Activated naive CD4-positive, alpha-beta T cell treated with anti-CD3 and anti-CD28 coated beads for 36 hours (primary cell): ENCODE measurements at regions of chr17 and their contacts with region 1.

Region 1: GRCh38 chr17:77186141-77186604 is 45.4 kb downstream of the SEC14L1 start:
- DNase-seq: peak; percentile 46
- H3K4me3 Mint-ChIP-seq: no peak overlapping the region
- H3K27ac Mint-ChIP-seq: no peak overlapping the region
- H3K4me1 Mint-ChIP-seq: peaks cover 44% of the 10 kb centered on the region
- H3K27me3 Mint-ChIP-seq: no peaks in the 10 kb centered on the region

Region 2: DNA sequence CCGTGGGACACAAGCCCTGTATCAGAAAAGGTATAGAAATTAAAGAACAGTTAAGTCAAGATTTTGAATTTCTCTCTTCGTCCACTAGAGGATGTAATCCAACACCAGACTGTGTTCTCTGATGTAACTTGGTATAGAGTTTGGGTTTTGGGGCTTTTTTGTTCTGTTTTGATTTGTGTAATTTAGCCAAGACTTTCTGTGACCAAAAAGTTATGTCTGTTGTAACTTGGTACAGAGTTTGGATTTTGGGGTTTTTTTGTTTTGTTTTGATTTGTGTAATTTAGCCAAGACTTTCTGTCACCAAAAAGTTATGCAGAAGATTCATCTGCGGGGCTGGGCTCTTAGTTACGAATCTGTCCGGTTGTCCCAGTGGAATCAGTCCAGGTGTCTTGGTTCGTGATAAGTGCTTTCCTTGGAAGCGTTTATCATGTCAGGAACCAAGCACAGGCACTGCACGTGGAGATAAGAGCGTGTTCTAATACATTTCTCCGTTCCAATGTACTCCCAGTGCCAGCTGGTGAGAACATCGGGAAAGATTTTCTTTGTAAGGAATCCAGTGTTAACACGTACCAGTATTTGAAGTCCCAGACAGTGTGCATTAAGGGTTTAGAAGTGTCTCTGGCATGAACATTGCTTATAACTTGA is 89.5 kb before region 1 on chr17:
- CTCF ChIA-PET with region 1: no interaction called
- intact Hi-C with region 1: loop called (anchors 5 kb)
- DNase-seq: no peak
- H3K4me3 Mint-ChIP-seq: no peak overlapping the region
- H3K27ac Mint-ChIP-seq: peak overlapping the region; percentile 80
- H3K4me1 Mint-ChIP-seq: peaks cover 46% of the 10 kb centered on the region
- H3K27me3 Mint-ChIP-seq: no peaks in the 10 kb centered on the region

Region 3: GRCh38 chr17:77160091-77160874 is 25.9 kb before region 1 on chr17:
- CTCF ChIA-PET with region 1: no interaction called
- intact Hi-C with region 1: loop called (anchors 1 kb)
- DNase-seq: no peak
- H3K4me3 Mint-ChIP-seq: no peak overlapping the region
- H3K27ac Mint-ChIP-seq: no peak overlapping the region
- H3K4me1 Mint-ChIP-seq: peaks cover 37% of the 10 kb centered on the region
- H3K27me3 Mint-ChIP-seq: no peaks in the 10 kb centered on the region